Activated B cell treated with CpG ODN at 0.5 μM for 24 hours (primary cell): ENCODE measurements at regions of chr11 and their contacts with region 1.

Region 1: DNA sequence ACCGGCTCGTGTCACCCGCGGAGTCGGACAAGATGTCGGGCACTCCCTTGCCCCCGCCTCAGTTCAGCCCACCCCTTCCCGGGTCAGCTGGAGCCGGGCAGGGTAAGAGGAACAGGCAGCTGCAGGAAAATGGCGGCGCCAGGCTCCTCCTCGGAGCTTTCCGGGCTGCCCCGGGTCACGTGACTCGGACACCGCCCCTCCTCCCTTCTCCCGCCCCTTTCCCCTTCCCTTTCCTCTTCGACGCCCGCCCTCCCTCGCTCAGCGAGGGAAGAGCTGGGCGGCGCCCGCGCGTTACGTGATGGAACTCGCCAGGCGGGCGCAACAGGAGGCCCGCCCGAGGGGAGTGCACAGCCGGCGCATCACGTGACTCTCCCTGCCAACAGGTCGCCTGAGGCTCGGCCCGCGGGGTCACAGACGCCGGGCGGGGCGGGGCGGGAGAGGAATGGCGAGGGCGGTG is at the start of gene PICALM:
- DNase-seq: peak; percentile 94
- ATAC-seq: peak; percentile 82
- H3K4me3 Mint-ChIP-seq: peak within 1 kb of the TSS; percentile 97
- H3K27ac Mint-ChIP-seq: peak within 1 kb of the TSS; percentile 95
- H3K4me1 Mint-ChIP-seq: peaks cover 50% of the 10 kb centered on the region
- H3K27me3 Mint-ChIP-seq: no peaks in the 10 kb centered on the region
- CTCF ChIP-seq: no peak
- total RNA-seq, gene PICALM: 118 and 139 TPM in 2 replicates

Region 2: GRCh38 chr11:85664615-85665481 is 404.1 kb before region 1 on chr11 and contains the start of gene CREBZF:
- CTCF ChIA-PET with region 1: no interaction called
- POLR2A ChIA-PET with region 1: interaction called, 3 read pairs
- intact Hi-C with region 1: loop called (anchors 5 kb)
- DNase-seq: peak; percentile 96
- ATAC-seq: peak; percentile 86
- H3K4me3 Mint-ChIP-seq: peak within 1 kb of the TSS; percentile 95
- H3K27ac Mint-ChIP-seq: peak within 1 kb of the TSS; percentile 93
- H3K4me1 Mint-ChIP-seq: peaks cover 45% of the 10 kb centered on the region
- H3K27me3 Mint-ChIP-seq: no peaks in the 10 kb centered on the region
- CTCF ChIP-seq: no peak
- total RNA-seq, gene CREBZF: 46.1 and 60.3 TPM in 2 replicates

Region 3: GRCh38 chr11:86056351-86056854 is 12.6 kb before region 1 on chr11:
- CTCF ChIA-PET with region 1: no interaction called
- POLR2A ChIA-PET with region 1: interaction called, 10 read pairs
- intact Hi-C with region 1: loop called (anchors 1 kb)
- DNase-seq: no peak
- ATAC-seq: no peak
- H3K4me3 Mint-ChIP-seq: no peak overlapping the region
- H3K27ac Mint-ChIP-seq: peak overlapping the region; percentile 30
- H3K4me1 Mint-ChIP-seq: peaks cover 92% of the 10 kb centered on the region
- H3K27me3 Mint-ChIP-seq: no peaks in the 10 kb centered on the region
- CTCF ChIP-seq: no peak

Region 4: GRCh38 chr11:86174101-86175046 is 105.4 kb after region 1 on chr11:
- CTCF ChIA-PET with region 1: no interaction called
- POLR2A ChIA-PET with region 1: no interaction called
- intact Hi-C with region 1: loop called (anchors 5 kb)
- DNase-seq: no peak
- ATAC-seq: no peak
- H3K4me3 Mint-ChIP-seq: no peak overlapping the region
- H3K27ac Mint-ChIP-seq: no peak overlapping the region
- H3K4me1 Mint-ChIP-seq: peaks cover 8% of the 10 kb centered on the region
- H3K27me3 Mint-ChIP-seq: no peaks in the 10 kb centered on the region
- CTCF ChIP-seq: no peak

Region 5: DNA sequence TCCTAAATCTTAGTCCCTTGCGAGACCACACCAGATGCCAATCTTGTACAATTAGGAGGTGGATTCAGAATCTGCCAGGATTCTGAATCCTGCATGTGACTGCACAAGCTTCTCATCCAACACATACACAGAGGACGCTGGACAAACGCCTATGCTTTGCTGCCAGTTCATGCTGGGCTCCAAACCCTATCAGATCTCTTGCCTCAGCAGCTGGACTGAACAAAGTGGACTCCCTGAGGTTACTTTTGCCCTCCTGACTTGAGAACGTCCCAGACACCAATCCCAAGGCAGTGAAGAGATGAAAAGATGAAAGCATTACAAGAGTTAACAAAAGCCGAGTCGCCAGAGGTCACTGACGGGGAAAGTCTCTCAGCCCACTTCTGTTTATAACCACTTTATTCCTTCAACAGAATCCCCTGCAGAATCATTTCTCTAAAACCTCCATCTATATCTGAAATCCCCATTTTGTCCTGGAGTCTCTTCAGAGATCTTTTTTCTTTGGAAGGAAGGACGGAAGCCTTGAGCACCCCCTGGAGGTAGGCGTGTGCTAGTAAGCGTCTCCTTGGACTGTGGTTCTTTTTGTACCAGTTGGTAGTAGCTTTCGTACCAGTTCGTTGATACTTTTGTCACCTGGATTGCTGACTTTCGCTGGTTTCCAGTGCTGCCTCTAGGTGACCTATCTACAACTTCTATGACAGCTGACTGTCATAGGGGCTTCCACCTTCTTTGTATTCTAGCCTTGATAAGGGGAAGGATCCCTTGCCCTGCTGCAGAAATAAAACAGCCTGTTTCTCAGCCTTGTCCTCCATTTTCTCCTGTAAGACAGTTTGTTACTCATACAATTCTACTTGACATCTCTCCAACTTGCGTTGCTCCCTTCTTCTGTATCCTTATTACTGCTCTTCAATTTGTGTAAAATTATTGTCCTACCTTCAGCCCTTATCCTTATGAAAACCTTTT is 149.4 kb after region 1 on chr11:
- CTCF ChIA-PET with region 1: interaction called, 4 read pairs
- POLR2A ChIA-PET with region 1: interaction called, 60 read pairs
- intact Hi-C with region 1: loop called (anchors 1 kb)
- DNase-seq: no peak
- ATAC-seq: peak; percentile 22
- H3K4me3 Mint-ChIP-seq: peak overlapping the region; percentile 69
- H3K27ac Mint-ChIP-seq: peak overlapping the region; percentile 94
- H3K4me1 Mint-ChIP-seq: peaks cover 48% of the 10 kb centered on the region
- H3K27me3 Mint-ChIP-seq: no peaks in the 10 kb centered on the region
- CTCF ChIP-seq: peak; percentile 32

Region 6: DNA sequence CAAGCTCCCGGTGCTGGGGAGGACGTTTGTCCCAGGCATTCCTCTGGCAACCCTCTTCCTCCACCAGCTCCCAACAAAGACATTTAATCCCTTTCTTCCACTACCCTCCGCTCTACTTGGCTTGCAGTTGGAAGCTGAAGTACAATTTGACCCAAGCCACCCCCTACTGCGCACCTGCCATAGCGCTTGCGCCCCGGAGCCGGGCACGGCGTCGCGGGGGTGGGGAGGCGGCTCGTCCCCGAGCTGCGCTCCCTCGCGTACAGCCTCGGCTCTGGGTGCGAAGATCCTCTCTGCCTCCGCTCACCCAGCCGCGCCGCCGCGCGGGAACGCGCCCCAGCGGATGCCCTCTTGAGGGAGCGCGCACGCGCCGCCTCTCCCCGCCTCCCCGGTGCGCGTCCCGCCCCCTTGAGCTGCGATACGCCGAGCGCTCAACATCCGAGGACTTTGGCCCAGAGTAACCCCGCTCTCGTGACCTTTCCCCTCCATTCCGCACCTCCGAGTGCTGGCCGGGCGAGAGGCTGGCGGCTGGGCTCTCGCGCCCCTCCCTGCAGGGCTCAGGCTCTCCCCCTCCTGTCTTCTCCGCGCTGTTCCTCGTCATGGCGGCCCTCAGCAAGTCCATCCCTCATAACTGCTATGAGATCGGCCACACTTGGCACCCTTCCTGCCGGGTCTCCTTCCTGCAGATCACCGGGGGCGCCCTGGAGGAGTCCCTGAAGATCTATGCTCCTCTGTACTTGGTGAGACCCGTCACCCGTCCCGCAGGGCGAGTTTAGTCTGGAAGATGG is 968.7 kb after region 1 on chr11 and contains the start of gene TMEM135:
- CTCF ChIA-PET with region 1: no interaction called
- POLR2A ChIA-PET with region 1: no interaction called
- intact Hi-C with region 1: loop called (anchors 5 kb)
- DNase-seq: peak; percentile 91
- ATAC-seq: peak; percentile 96
- H3K4me3 Mint-ChIP-seq: peak within 1 kb of the TSS; percentile 99
- H3K27ac Mint-ChIP-seq: peak within 1 kb of the TSS; percentile 75
- H3K4me1 Mint-ChIP-seq: peaks cover 34% of the 10 kb centered on the region
- H3K27me3 Mint-ChIP-seq: no peaks in the 10 kb centered on the region
- CTCF ChIP-seq: no peak
- total RNA-seq, gene TMEM135: 7.4 and 10.1 TPM in 2 replicates